ENCODE measurements at regions of chr7 and their contacts with region 1.

Region 1: GRCh38 chr7:17444673-17445072 is 146.2 kb downstream of the AHR start:
- DNase-seq: no peak

Region 2: DNA sequence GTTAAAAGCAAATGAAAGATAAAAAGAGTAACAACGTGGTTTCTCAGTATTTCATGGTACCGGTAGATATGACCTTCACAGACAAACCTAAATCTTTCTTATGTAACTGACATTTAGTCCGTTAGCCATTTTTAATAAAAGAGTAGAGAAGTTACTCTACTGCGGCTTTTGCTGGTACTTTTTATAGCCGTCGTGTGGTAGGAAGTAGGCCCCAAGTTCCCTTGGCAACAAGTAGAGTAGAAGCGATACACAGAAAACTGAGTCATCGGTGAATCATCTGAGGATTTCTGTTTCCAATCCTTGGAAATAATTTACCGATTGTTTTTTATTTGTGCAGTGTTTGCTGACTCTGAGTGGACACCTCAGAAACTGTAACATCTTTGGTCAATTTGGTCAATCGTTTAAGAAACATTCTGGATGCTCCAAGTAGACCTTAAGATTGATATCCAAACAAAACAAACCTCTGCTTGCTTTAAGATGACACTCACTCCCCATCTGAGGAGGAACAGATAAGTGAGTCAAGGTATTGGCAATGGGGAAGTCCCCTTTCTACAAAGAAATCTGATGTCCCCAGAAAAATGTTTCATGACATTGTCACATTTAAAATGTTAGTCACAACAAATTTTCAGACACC is 210.2 kb before region 1 on chr7:
- intact Hi-C with region 1: no loop called
- DNase-seq: no peak

Region 3: DNA sequence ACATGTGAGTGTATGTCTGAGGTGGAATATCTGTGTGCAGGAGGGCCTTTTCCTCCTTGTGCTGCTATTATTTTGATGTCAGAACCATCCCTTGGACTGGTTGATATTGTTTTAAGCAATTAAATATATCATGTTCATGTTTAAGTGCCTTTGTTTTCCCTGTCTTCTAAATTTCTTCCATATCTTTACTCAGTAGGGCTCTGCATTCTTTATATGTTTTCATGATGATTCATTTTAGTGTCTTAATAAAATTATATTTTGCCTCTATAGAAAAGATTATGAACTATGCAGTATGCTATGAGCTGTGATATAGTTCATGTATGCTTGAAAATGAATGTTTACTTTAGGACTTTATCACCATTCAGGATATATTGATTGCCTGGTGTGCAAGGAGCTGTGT is 111.5 kb before region 1 on chr7:
- intact Hi-C with region 1: no loop called
- DNase-seq: no peak

Region 4: DNA sequence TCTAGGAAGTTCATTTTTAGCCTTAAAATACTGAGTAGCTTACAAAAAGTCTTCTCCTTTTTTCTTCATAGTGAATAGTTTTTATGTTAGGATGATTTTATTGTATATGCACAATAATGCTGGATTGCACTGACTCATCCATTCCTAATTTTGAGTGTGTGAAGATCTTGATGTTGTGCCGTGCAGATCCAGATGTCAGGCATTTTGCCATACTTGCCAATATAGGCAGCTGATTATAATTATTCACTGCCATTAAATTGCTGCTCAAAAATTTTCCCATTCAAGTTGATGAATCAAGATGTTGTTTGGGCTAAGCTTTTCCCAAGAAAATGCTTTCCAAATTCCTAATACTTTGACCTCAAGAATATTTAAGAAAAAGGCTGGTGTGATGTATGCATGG is 72.1 kb after region 1 on chr7:
- intact Hi-C with region 1: loop called (anchors 10 kb)
- DNase-seq: no peak

Region 5: GRCh38 chr7:17651926-17652385 is 207.3 kb after region 1 on chr7:
- intact Hi-C with region 1: no loop called
- DNase-seq: no peak